K562 (cell line): ENCODE measurements at regions of chr5 and their contacts with region 1.

Region 1: GRCh38 chr5:171939951-171940350 is 66.5 kb downstream of the FBXW11 start:
- DNase-seq: no peak
- ATAC-seq: no peak
- H3K4me3 ChIP-seq: no peak overlapping the region
- H3K27ac ChIP-seq: peak overlapping the region; percentile 38; the same call in 1 of the 3 replicates
- H3K4me1 ChIP-seq: peaks cover 0 to 4% of the 10 kb centered on the region in 2 experiments; a peak in 2 of 5 replicates
- H3K27me3 ChIP-seq: no peaks in the 10 kb centered on the region
- CTCF ChIP-seq: no peak
- EP300 ChIP-seq: no peak
- POLR2A ChIP-seq: no peak
- RAD21 ChIP-seq: no peak

Region 2: DNA sequence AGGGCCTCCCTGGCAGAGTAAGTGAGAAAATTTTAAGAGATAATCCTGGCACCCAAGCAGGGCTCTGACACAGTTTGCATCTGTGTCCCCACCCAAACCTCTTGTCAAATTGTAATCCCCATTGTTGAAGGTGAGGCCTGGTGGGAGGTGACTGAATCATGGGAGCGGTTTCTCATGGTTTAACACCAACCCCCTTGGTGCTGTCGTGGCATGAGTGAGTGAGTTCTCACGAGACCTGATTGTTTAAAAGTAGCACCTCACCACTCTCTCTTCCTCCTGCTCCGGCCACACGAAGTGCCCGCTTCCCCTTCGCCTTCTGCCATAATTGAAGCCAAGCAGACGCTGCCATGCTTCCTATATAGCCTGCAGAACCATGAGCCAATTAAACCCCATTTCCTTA is 13.6 kb before region 1 on chr5:
- CTCF ChIA-PET with region 1: no interaction called
- POLR2A ChIA-PET with region 1: no interaction called
- in situ Hi-C with region 1: no loop called
- intact Hi-C with region 1: no loop called
- DNase-seq: no peak
- ATAC-seq: no peak
- H3K4me3 ChIP-seq: no peak overlapping the region
- H3K27ac ChIP-seq: no peak overlapping the region
- H3K4me1 ChIP-seq: no peaks in the 10 kb centered on the region
- H3K27me3 ChIP-seq: no peaks in the 10 kb centered on the region
- CTCF ChIP-seq: no peak
- EP300 ChIP-seq: no peak
- POLR2A ChIP-seq: no peak
- RAD21 ChIP-seq: no peak

Region 3: DNA sequence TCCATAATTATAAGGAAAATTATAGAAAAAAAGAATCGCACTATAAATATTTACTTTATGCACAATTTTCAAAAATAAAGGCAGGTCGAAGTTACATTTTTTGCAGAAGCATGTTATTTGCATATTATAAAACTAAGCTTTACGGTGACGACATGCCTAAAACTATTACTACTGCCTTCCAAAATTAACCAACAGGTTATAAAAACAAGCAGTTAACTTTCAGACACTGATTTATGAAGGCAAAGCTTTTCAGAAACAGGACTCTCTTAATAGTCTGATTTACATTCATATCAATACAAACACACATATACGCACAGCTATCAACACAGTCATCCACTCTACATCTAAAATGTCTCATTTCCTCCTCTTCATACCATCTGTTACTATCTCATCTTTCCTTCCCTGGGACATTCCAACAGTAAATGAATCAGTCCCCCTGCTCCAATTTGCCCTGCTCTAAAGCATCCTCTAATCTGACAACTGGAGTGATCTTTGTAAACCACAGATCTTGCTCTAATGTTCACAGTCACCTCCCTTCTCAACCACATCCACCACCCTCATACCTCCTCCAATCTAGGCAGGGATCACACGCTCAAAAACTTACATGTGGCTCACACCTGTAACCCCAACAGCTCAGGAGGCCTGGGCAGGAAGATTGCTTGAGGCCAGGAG is 44.9 kb after region 1 on chr5:
- CTCF ChIA-PET with region 1: no interaction called
- POLR2A ChIA-PET with region 1: no interaction called
- in situ Hi-C with region 1: no loop called
- intact Hi-C with region 1: loop called (anchors 5 kb)
- DNase-seq: no peak
- ATAC-seq: peak; percentile 38
- H3K4me3 ChIP-seq: no peak overlapping the region
- H3K27ac ChIP-seq: no peak overlapping the region
- H3K4me1 ChIP-seq: peaks cover 5 to 6% of the 10 kb centered on the region in 2 experiments; a peak in 3 of 5 replicates
- H3K27me3 ChIP-seq: no peaks in the 10 kb centered on the region
- CTCF ChIP-seq: no peak
- EP300 ChIP-seq: no peak
- POLR2A ChIP-seq: no peak
- RAD21 ChIP-seq: no peak